Activated CD4-positive, alpha-beta T cell treated with anti-CD3 and anti-CD28 coated beads for 36 hours (primary cell): ENCODE measurements at regions of chr3 and their contacts with region 1.

Region 1: GRCh38 chr3:143535994-143536784 is 312.1 kb downstream of the SLC9A9 start:
- DNase-seq: no peak
- ATAC-seq: peak; percentile 88
- H3K4me3 Mint-ChIP-seq: no peak overlapping the region
- H3K27ac Mint-ChIP-seq: no peak overlapping the region
- H3K4me1 Mint-ChIP-seq: peaks cover 18% of the 10 kb centered on the region
- H3K27me3 Mint-ChIP-seq: no peaks in the 10 kb centered on the region

Region 2: GRCh38 chr3:143040261-143040879 is 495.8 kb before region 1 on chr3:
- CTCF ChIA-PET with region 1: no interaction called
- POLR2A ChIA-PET with region 1: no interaction called
- intact Hi-C with region 1: no loop called
- DNase-seq: no peak
- ATAC-seq: no peak
- H3K4me3 Mint-ChIP-seq: no peak overlapping the region
- H3K27ac Mint-ChIP-seq: no peak overlapping the region
- H3K4me1 Mint-ChIP-seq: peaks cover 6% of the 10 kb centered on the region
- H3K27me3 Mint-ChIP-seq: no peaks in the 10 kb centered on the region

Region 3: DNA sequence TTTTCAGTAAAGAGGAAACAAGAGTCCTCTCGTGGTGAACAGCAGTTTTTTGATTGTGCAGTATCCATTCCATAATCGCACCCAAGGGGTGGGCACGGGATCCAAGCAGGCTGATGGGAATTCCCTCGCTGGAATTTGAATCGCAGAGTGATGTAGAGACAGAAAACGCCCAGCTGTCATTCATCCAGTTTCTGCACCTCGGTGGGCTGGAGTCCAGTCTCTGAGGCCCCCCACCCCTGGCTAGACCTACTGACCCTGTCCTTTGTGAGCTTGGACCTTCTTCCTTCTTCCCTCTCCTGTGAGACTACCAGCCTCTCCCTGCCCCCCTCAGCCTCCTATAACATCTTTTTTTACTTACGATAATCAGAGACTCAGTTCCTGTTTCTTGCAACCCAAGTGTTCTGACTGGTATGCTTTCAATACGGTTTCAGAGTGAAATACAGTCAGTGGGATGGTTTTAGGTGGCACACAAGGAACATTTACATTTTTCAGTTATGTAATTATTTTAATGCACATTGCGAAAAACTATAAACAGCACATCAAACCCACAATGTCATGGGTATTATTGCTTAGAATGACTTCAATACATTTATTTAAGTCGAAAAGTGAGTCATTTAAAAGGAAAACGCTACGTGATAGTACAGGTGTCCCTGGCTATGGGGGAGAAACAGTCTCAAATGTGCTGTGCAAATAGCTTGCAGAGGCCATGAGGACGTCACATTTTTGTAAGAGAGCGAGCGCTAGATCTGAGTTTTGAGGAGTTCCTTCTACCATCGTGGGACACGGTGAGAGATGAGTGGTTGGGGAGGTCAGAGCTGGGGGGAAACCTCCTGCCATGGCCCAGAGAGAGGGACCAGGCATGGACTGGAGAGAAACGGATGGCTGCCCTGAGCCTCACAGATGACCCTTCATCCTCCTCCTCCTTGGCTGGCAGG is 454.1 kb before region 1 on chr3:
- CTCF ChIA-PET with region 1: no interaction called
- POLR2A ChIA-PET with region 1: no interaction called
- intact Hi-C with region 1: loop called in 1 of 2 experiments (anchors 1 kb)
- DNase-seq: peak; percentile 54
- ATAC-seq: peak; percentile 87
- H3K4me3 Mint-ChIP-seq: peak overlapping the region; percentile 75
- H3K27ac Mint-ChIP-seq: peak overlapping the region; percentile 98
- H3K4me1 Mint-ChIP-seq: peaks cover 36% of the 10 kb centered on the region
- H3K27me3 Mint-ChIP-seq: no peaks in the 10 kb centered on the region

Region 4: DNA sequence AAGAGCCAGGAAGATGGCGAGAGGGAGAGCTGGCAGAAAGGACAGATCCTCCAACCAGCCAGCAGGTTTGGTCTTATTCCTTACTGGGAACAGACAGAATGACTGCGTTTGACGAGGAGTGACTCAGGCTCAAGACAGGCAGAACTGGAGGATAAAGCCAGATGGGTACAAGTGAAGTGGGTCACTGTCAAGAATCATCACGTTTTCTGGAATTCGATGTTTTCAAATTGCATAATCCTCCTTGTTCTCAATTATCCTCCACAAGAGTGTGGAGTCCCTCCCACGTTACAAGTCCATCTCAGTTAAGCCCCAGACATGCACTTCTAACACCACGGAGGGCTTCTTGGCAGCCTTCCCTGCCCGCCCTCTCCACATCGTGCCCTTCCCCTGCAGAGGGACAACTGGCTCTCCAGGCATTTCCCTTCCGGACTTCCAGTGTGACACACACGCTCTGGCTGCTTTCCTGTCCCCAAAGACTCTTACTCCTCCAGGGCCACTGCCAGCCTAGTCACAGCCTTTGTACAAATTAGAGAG is 233.5 kb before region 1 on chr3:
- CTCF ChIA-PET with region 1: no interaction called
- POLR2A ChIA-PET with region 1: no interaction called
- intact Hi-C with region 1: no loop called
- DNase-seq: no peak
- ATAC-seq: no peak
- H3K4me3 Mint-ChIP-seq: no peak overlapping the region
- H3K27ac Mint-ChIP-seq: no peak overlapping the region
- H3K4me1 Mint-ChIP-seq: peaks cover 14% of the 10 kb centered on the region
- H3K27me3 Mint-ChIP-seq: no peaks in the 10 kb centered on the region

Region 5: DNA sequence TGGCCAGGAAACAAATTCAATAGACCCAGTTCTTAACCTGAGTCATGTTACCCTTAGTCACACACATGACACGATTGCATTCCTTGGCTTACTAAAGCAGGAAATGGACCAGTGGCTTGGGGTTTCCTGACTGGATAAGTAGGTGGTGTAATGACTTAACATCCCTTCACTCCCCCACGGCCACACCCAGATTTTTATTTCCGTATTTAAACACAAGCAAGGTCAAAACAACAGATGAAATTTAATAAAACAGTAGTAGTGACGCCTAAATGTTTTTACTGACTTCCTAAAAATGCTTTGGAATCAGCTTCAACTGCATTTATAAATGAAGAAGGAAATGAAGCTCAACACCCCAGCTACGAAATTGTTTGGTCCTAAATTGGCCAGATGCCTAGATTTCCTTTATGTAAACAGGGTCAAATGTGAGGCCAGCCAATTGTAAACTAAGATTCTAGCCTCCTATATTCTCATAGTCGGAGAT is 92.3 kb before region 1 on chr3:
- CTCF ChIA-PET with region 1: interaction called, 4 read pairs
- POLR2A ChIA-PET with region 1: no interaction called
- intact Hi-C with region 1: loop called (anchors 2 to 5 kb)
- DNase-seq: peak; percentile 42
- ATAC-seq: peak; percentile 71
- H3K4me3 Mint-ChIP-seq: no peak overlapping the region
- H3K27ac Mint-ChIP-seq: peak overlapping the region; percentile 38
- H3K4me1 Mint-ChIP-seq: peaks cover 32% of the 10 kb centered on the region
- H3K27me3 Mint-ChIP-seq: no peaks in the 10 kb centered on the region

Region 6: GRCh38 chr3:143849854-143850549 is 313.8 kb after region 1 on chr3:
- CTCF ChIA-PET with region 1: no interaction called
- POLR2A ChIA-PET with region 1: no interaction called
- intact Hi-C with region 1: no loop called
- DNase-seq: no peak
- ATAC-seq: no peak
- H3K4me3 Mint-ChIP-seq: no peak overlapping the region
- H3K27ac Mint-ChIP-seq: no peak overlapping the region
- H3K4me1 Mint-ChIP-seq: peaks cover 51% of the 10 kb centered on the region
- H3K27me3 Mint-ChIP-seq: no peaks in the 10 kb centered on the region